GM13976 (cell line): ENCODE measurements at regions of chr4 and their contacts with region 1.

Region 1: GRCh38 chr4:40309250-40309774 is 25.8 kb upstream of the CHRNA9 start:
- DNase-seq: peak; percentile 49
- CTCF ChIP-seq: peak; percentile 94

Region 2: GRCh38 chr4:40003986-40004385 is 305.3 kb before region 1 on chr4:
- in situ Hi-C with region 1: no loop called
- DNase-seq: no peak
- CTCF ChIP-seq: no peak

Region 3: DNA sequence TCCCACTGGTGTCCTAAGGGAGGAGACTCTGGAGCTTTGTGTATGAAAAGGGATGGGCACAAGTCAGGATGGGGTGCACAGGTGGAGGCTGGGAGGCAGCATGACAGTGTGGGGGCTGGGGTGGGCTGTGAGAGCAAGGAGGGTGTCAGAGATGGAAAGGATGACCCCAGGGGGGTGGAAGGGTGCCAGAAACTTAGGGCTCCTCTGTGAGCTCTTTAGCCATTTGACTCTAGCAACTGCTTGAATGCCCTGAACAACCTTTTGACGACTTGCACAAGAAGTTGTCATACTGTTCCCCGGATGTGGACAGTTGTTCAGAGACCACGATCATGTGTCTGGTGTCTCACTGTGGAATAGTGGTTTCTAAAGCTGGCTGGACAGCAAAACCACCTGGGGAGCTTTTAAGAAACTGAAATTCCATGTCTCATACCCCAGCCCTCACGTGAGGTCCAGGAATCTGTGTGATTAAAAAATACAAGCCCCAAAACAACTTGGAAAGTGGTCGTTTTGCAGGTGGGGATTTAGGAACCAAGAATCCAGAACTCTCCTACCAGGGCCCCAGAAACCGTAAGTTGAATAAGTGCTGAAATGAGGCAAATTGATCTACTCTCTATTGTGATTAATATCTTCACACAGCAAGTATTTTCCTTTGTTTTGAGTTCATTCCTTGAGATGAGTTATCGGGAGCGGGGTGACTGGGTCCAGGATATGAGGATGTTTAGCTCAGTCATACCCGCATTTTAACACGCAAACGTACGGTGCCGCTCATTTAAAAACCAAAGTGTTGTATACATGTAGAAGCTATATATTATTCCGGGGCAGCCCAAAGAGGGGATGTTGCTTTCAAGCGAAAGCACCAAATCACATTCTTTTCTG is 109.1 kb before region 1 on chr4:
- in situ Hi-C with region 1: loop called (anchors 25 kb)
- DNase-seq: peak; percentile 40
- CTCF ChIP-seq: no peak